OCI-LY7 (cell line): ENCODE measurements at regions of chr13 and their contacts with region 1.

Region 1: DNA sequence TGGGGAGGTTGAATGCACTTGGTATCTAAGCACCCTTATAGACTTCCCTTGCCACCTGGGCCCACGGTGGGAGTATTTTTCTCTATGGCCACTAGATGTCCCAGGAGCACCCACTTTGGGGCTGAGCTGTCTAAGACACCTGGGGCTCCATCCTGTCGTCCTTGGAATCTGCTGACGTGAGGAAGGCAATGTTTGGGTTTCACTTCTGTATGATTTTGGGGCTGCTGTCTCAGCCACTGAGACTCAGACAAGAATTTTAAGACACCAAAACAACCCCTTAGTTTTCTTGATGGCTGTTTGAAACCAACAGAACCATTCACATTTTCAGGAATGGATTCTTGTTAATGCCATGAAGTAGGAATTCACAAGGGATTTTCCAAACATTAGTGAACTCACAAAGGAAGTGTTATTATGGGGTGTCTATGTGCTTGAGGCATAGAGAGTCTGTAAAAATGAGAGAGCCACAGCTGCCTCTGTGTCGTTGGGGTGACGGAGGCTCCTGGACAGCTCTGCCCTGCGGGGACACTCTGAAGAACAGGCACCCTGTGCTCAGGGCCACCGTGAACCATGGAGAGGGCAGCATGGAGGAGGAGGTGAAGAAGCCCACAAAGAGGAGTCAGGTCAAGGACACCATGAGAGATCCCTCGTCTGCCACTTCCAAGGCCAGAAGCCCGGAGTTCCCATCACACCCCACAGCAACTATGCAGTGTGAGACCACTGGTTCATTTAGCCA is 106.8 kb upstream of the SPATA13 start:
- DNase-seq: peak; percentile 78
- H3K4me3 ChIP-seq: no peak overlapping the region
- H3K27ac ChIP-seq: no peak overlapping the region
- H3K4me1 ChIP-seq: peaks cover 3% of the 10 kb centered on the region
- CTCF ChIP-seq: peak; percentile 91

Region 2: DNA sequence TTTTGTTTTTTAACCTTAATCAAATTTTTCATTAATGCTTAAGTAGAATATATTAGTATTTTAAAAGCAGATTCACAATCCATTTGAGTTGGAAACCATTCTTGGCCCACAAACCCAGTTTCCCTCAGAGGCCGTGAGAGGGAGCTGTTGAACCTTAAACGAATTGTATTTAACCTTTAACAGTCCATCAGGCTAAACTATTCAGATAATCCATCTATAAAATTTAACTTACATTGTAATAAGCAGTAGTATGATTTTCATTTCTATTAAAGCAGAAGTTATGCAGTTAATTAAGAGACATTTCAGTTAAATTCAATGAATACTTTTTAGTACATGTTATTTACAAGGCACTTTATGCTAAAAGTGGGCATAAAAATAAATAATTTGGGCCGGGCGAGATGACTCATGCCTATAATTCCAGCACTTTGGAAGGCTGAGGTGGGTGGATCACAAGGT is 33.3 kb before region 1 on chr13:
- CTCF ChIA-PET with region 1: no interaction called
- POLR2A ChIA-PET with region 1: no interaction called
- intact Hi-C with region 1: loop called (anchors 1 kb)
- DNase-seq: peak; percentile 57
- H3K4me3 ChIP-seq: no peak overlapping the region
- H3K27ac ChIP-seq: no peak overlapping the region
- H3K4me1 ChIP-seq: no peaks in the 10 kb centered on the region
- CTCF ChIP-seq: peak; percentile 90

Region 3: DNA sequence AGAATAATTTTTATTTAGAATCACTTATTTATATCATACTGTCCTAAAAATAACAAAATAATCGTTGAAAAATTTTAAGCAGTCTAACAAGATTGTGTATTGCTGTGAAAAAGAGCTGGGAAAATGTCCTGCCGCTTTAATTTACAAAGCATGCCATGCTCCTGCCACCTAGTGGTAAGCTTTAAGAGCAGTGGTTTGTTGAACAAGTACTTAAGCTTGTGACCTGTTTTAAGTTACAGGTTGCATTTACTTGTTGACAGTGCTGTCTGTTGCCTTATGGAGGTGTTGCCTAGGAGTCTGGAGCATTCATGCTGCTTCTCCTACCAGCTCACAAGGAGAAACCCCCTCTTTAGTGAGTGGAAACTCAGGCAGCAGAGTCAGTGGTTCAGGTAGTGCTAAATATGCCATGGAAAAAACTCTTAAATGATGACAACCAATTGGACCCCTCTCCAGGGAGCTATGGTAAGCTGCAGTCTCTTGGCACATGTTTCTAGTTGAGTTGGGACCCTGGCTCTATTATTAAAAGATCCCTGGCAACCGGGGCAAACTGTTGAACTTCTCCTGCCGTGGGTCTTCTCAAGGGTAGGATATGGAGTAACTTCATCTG is 175.3 kb after region 1 on chr13:
- CTCF ChIA-PET with region 1: no interaction called
- POLR2A ChIA-PET with region 1: interaction called, 4 read pairs
- intact Hi-C with region 1: loop called (anchors 2 kb)
- DNase-seq: peak; percentile 66
- H3K4me3 ChIP-seq: no peak overlapping the region
- H3K27ac ChIP-seq: no peak overlapping the region
- H3K4me1 ChIP-seq: no peaks in the 10 kb centered on the region
- CTCF ChIP-seq: peak; percentile 94